ENCODE measurements at regions of chr16 and their contacts with region 1.

Region 1: DNA sequence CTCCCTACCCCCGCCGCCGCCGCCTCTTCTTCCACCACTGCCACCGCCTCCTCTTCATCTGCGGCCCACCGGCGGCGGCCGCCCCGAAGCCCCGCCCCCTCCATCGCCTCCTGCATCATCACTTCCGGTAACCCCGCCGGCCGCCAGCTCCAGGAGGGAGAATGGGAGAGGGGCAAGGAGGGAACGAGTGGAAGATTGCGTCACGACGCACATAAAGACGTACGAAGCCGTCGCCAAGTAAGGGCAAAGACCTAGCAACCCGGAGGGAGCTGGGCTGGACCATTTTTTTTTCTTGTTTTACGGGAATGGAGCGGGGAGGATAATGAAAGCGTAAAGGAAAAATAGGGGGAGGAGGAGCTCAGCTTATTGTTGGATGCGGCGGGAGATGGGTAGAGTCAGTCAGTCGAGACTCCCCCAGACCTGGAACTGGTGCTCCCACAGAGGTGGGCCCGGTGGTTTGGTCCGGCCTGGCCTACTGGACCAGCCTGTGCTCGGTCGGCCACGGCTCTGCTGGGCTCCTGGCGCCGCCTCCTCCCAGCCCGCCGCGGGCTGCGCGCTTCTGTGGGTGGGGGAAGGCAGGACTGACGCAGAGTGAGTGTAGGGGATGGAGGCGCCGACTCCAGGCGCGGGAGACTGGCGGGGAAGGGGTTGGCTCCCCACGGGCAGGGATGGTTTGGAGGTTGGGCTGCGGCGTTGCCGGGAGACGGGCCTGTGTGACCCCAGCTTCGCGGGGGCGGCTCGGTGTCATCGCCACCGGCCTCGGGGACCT is at the starts of genes DCUN1D3 and LYRM1:
- DNase-seq: peak; percentile 98
- ATAC-seq: peak; percentile 81
- H3K4me3 ChIP-seq: peak within 1 kb of the TSS; percentile 86 to 88
- H3K27ac ChIP-seq: peak within 1 kb of the TSS; percentile 90
- H3K4me1 ChIP-seq: peaks cover 45 to 68% of the 10 kb centered on the region in 2 experiments
- H3K27me3 ChIP-seq: no peaks in the 10 kb centered on the region
- CTCF ChIP-seq: no peak
- POLR2A ChIP-seq: peak; percentile 79
- RAD21 ChIP-seq: no peak
- total RNA-seq, gene DCUN1D3: 16.4 TPM
- total RNA-seq, gene LYRM1: 26.7 TPM

Region 2: GRCh38 chr16:20866145-20866772 is 34.2 kb before region 1 on chr16:
- CTCF ChIA-PET with region 1: no interaction called
- POLR2A ChIA-PET with region 1: interaction called, 4 read pairs
- RAD21 ChIA-PET with region 1: no interaction called
- intact Hi-C with region 1: loop called (anchors 5 kb)
- DNase-seq: peak; percentile 78
- ATAC-seq: peak; percentile 91
- H3K4me3 ChIP-seq: peak overlapping the region; percentile 22 to 41
- H3K27ac ChIP-seq: peak overlapping the region; percentile 96
- H3K4me1 ChIP-seq: peaks cover 57 to 61% of the 10 kb centered on the region in 2 experiments
- H3K27me3 ChIP-seq: no peaks in the 10 kb centered on the region
- CTCF ChIP-seq: no peak
- POLR2A ChIP-seq: no peak
- RAD21 ChIP-seq: no peak

Region 3: DNA sequence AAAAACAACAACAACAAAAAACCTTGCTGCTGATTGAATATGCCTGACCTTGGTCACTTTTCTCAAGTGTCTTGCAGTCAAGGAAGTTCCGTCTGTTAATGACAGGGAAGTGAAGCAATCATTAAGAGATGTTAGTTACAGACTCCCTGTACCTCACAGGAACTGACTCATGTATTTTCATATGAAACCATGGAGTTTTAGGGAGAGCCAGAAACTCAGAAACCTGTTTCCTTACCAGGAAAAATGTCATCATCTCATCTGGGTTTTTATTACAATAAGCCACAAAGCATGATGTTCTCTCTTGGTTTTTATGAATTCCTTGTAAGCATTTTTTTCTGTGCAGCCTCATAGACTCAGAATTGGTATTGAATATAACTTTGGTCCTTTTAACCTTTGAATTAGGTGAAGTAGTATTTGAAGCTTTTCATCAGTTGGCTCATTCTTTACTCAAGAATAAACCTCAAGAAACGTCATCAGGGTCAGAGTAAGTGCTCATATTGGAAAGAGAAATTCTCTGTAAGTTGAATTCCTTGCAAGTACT is 10.4 kb after region 1 on chr16:
- CTCF ChIA-PET with region 1: no interaction called
- POLR2A ChIA-PET with region 1: interaction called, 11 read pairs
- RAD21 ChIA-PET with region 1: no interaction called
- intact Hi-C with region 1: no loop called
- DNase-seq: peak; percentile 75
- ATAC-seq: no peak; the same call in 1 of the 2 replicates
- H3K4me3 ChIP-seq: no peak overlapping the region
- H3K27ac ChIP-seq: peak overlapping the region; percentile 33; the same call in 1 of the 2 replicates
- H3K4me1 ChIP-seq: peaks cover 48 to 80% of the 10 kb centered on the region in 2 experiments
- H3K27me3 ChIP-seq: no peaks in the 10 kb centered on the region
- CTCF ChIP-seq: no peak
- POLR2A ChIP-seq: no peak
- RAD21 ChIP-seq: peak; percentile 10; the same call in 1 of the 2 replicates

Region 4: GRCh38 chr16:20995711-20996110 is 95.2 kb after region 1 on chr16:
- CTCF ChIA-PET with region 1: no interaction called
- POLR2A ChIA-PET with region 1: no interaction called
- RAD21 ChIA-PET with region 1: no interaction called
- intact Hi-C with region 1: no loop called
- DNase-seq: no peak
- ATAC-seq: no peak
- H3K4me3 ChIP-seq: no peak overlapping the region
- H3K27ac ChIP-seq: no peak overlapping the region
- H3K4me1 ChIP-seq: no peaks in the 10 kb centered on the region
- H3K27me3 ChIP-seq: no peaks in the 10 kb centered on the region
- CTCF ChIP-seq: no peak
- POLR2A ChIP-seq: no peak
- RAD21 ChIP-seq: no peak

Measured in HCT116 (cell line).